ENCODE measurements at regions of chr12 and their contacts with region 1.

Region 1: GRCh38 chr12:25364529-25365339 is 114.0 kb upstream of the KRAS start:
- DNase-seq: no peak
- H3K4me3 Mint-ChIP-seq: peak overlapping the region; percentile 40
- H3K27ac Mint-ChIP-seq: peak overlapping the region; percentile 91
- H3K4me1 Mint-ChIP-seq: peaks cover 15% of the 10 kb centered on the region
- H3K27me3 Mint-ChIP-seq: peaks cover 5% of the 10 kb centered on the region

Region 2: GRCh38 chr12:24948757-24949722 is 415.7 kb before region 1 on chr12 and contains the start of gene BCAT1:
- intact Hi-C with region 1: loop called (anchors 5 kb)
- DNase-seq: peak; percentile 82
- H3K4me3 Mint-ChIP-seq: peak within 1 kb of the TSS; percentile 92
- H3K27ac Mint-ChIP-seq: peak within 1 kb of the TSS; percentile 93
- H3K4me1 Mint-ChIP-seq: peaks cover 52% of the 10 kb centered on the region
- H3K27me3 Mint-ChIP-seq: peaks cover 8% of the 10 kb centered on the region
- total RNA-seq, gene BCAT1: 49.7 and 51.9 TPM in 2 replicates

Region 3: DNA sequence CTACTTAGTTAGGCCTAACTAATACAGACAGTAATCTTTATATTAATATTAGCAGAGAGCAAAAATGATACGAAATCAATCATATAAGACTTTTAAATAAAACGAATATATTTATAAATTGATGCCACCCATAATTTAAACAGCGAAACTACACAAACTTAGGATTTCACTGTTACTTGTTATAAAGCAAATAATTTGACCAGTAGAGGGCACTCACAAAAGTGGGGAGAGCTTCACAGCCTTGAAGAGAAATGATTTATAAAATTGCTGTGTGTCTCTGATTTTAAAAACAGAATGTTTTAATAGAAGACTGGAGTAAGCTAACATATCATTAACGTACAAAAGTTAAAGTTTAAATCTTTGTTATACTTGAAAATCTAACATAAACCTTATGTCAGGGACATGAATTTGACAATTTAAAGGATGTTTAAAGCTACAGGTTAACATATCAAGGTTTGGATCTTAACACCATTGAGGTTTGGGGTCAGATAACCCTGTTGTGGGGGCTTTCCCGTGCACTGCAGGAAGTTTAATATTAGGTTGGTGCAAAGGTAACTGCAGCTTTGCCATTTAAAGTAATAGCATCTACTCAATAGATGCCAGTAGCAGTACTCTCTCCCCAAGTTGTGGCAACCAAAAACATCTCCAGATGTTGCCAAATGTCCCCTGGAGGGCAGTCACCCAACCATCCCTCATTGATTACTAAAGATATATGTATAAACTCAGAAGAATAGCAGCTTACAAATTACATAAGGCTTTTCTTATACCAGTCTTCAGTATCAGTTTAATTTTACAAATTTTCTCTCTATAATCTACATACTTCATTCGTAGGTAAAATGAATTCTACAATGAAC is 123.3 kb before region 1 on chr12:
- intact Hi-C with region 1: loop called (anchors 1 kb)
- DNase-seq: peak; percentile 66
- H3K4me3 Mint-ChIP-seq: no peak overlapping the region
- H3K27ac Mint-ChIP-seq: no peak overlapping the region
- H3K4me1 Mint-ChIP-seq: peaks cover 22% of the 10 kb centered on the region
- H3K27me3 Mint-ChIP-seq: no peaks in the 10 kb centered on the region

Region 4: DNA sequence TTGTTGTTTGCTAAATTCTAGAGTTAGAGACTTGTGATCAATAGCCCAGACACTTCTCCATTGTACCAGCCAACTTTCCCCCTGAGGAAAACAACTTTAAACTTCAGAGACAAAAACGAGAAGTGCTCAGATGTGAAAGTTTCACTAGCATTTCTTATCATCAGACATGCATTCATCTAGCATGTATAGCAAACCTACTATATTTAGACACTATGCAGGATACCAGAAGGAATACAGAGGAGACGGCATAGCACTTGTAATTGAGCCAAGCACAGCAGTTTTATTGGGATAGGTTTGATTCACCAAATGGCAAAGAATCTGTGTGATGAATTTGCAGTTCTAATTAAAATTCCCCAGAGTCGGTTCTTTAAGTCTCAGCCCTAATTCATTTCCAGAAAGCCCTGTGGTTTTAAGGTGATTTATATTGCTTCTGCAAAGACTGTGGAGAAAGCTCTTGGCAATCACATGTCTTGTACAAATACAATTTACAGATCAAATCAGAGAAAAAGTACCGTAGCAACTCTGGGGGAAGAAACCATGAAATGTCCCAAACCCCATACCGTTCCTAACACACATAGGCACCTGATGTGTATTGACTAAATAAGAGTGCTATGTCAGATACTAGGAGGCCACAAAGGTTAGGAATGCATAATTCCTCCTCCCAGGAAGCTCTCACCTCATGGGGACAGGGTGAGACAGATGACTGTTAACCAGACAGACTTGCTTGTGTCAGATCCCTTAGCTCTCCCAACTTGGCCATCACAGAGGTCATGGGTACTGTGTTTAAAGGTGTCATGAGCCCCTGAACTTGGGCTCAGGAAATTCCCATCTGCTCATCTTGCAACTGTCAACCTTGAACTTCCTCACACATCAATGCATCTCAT is 44.4 kb before region 1 on chr12:
- intact Hi-C with region 1: loop called (anchors 1 kb)
- DNase-seq: peak; percentile 61
- H3K4me3 Mint-ChIP-seq: peak overlapping the region; percentile 43
- H3K27ac Mint-ChIP-seq: peak overlapping the region; percentile 80
- H3K4me1 Mint-ChIP-seq: peaks cover 47% of the 10 kb centered on the region
- H3K27me3 Mint-ChIP-seq: peaks cover 13% of the 10 kb centered on the region

Region 5: DNA sequence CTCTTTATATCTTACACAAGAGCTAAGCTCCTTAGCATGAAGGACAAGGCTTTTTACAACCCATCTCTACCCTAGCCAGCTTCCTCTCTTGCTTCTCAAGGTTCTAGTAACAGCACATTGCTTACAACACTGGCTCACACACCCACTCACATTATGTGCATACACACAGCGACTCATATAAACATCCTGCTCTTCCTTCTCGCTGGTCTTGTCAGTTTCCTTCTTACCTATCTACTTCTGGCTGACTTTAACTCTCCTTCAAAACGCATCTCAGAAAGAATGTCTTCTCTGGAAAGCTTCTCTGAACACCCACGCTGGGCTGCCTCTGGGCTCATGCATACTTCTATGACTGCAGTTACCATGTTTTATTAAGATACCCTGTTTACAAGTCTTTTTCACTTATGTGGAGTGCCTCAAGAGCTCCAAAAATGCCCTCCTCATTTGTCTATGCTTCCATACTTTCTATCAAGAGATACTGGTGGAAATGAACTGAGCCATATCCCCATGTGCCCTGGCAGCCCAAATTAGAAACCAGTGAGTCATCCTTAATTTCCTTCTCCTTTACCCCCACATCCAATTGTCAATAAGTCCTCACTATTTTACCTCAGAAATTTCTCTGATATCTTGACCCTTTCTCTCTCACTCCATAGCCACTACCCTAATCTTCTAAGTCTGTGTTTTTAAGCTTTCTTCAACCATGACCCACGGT is 12.9 kb after region 1 on chr12:
- intact Hi-C with region 1: loop called (anchors 1 kb)
- DNase-seq: peak; percentile 83
- H3K4me3 Mint-ChIP-seq: peak overlapping the region; percentile 40
- H3K27ac Mint-ChIP-seq: peak overlapping the region; percentile 72
- H3K4me1 Mint-ChIP-seq: peaks cover 68% of the 10 kb centered on the region
- H3K27me3 Mint-ChIP-seq: no peaks in the 10 kb centered on the region